Head of caudate nucleus (tissue), 42 donors: ENCODE measurements at regions of chr9 and their contacts with region 1.

Region 1: GRCh38 chr9:101028346-101029314 is at the start of gene PLPPR1:
- DNase-seq: peak; percentile 74 to 96 (median 89)

Region 2: DNA sequence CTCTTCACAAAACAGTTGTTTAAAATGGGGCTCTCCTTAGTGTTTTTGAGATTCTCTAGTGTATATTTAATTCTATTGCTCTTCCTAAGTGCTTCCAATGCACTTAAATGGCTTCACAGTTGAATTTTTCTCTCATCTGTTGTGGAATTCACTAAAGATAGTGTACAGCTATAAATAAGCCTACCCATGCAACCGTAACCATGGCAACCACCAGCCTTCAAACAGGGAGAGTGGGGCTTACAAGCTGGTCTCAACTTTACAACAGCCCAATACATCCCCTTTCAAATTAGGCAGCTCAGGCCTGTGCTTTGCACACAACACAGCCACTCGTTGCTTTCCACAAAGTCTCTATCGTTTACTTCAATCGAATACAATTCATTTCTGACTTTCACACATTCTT is 144.1 kb before region 1 on chr9:
- intact Hi-C with region 1: no loop called
- DNase-seq: peak in 36 of 42 donors; percentile 4 to 78 (median 34)

Region 3: DNA sequence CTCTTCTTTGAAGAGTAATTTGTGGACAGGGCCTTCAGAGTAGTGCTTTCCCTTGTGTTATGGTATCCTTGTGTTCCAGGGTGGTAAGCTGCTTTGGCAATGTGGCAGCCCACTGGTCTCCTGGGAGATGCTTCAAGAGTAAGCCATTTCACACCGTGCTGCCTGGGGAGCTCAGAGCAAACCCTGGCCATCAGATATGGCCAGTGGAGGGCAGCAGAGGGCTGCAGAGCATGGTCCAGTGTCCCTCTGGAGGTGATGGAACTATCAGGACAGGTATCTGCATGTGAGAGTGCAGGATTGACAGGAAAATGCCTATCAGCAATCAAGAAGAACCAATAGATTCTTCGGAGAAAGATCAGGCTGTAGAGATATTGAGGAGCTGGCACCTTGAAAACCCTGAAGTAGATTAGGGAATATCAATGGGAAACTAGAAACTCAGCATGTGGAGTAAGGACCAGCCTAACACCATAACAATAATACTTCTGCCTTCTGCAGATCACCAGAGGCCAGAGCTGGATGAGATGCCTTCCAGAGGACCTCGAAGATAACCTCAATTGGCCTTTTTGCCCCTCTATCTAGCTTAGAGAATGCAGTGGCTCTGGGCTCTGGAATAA is 90.7 kb after region 1 on chr9:
- intact Hi-C with region 1: loop called (anchors 5 kb)
- DNase-seq: peak; percentile 9 to 92 (median 73)